ENCODE measurements at regions of chr7 and their contacts with region 1.

Region 1: DNA sequence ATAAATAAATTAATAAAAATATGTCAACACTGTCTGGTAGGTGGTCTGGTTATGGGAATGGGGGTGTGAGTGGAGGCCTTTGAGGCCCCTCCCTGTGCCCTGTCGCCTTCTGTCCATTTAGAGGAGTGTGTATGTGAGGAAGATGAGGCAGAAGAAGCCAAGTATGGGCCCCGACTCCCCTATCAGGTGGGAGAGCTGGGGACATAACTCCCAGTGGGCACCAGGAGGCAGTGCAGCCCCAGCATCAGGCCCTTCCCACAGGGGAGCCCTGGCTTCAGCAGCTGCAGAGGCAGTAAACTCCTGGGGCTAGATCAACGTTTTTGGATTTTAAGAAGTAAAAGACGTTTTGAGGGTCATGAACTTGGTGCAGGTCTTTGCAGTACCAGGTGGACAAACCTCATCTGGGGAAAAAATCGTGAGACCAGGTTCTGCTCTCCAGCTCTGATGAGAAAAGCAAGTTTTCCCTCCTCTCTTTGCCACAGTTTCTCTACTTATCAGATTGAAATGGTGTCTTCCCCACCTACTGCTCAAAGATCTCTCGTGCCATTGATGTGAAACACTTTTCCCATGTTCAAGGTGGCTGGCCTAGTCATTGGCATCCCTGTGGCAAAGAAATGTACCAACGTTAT is 167.8 kb upstream of the EEPD1 start:
- H3K4me3 ChIP-seq: no peak overlapping the region
- H3K27ac ChIP-seq: no peak overlapping the region
- H3K4me1 ChIP-seq: no peaks in the 10 kb centered on the region
- CTCF ChIP-seq: peak; percentile 66

Region 2: GRCh38 chr7:35694781-35695472 is 290.3 kb before region 1 on chr7 and contains the start of gene HERPUD2:
- CTCF ChIA-PET with region 1: no interaction called
- POLR2A ChIA-PET with region 1: no interaction called
- H3K4me3 ChIP-seq: peak within 1 kb of the TSS; percentile 90
- H3K27ac ChIP-seq: peak within 1 kb of the TSS; percentile 78
- H3K4me1 ChIP-seq: no peaks in the 10 kb centered on the region
- CTCF ChIP-seq: peak; percentile 69

Region 3: GRCh38 chr7:35736725-35737124 is 248.5 kb before region 1 on chr7:
- CTCF ChIA-PET with region 1: no interaction called
- POLR2A ChIA-PET with region 1: no interaction called
- H3K4me3 ChIP-seq: no peak overlapping the region
- H3K27ac ChIP-seq: no peak overlapping the region
- H3K4me1 ChIP-seq: no peaks in the 10 kb centered on the region
- CTCF ChIP-seq: no peak

Region 4: GRCh38 chr7:36021367-36021766 is 36.1 kb after region 1 on chr7:
- CTCF ChIA-PET with region 1: interaction called, 13 read pairs
- POLR2A ChIA-PET with region 1: no interaction called
- H3K4me3 ChIP-seq: no peak overlapping the region
- H3K27ac ChIP-seq: no peak overlapping the region
- H3K4me1 ChIP-seq: no peaks in the 10 kb centered on the region
- CTCF ChIP-seq: no peak

Region 5: GRCh38 chr7:36291387-36292316 is 306.4 kb after region 1 on chr7:
- CTCF ChIA-PET with region 1: interaction called, 73 read pairs
- POLR2A ChIA-PET with region 1: no interaction called
- H3K4me3 ChIP-seq: no peak overlapping the region
- H3K27ac ChIP-seq: no peak overlapping the region
- H3K4me1 ChIP-seq: no peaks in the 10 kb centered on the region
- CTCF ChIP-seq: peak; percentile 93

Region 6: DNA sequence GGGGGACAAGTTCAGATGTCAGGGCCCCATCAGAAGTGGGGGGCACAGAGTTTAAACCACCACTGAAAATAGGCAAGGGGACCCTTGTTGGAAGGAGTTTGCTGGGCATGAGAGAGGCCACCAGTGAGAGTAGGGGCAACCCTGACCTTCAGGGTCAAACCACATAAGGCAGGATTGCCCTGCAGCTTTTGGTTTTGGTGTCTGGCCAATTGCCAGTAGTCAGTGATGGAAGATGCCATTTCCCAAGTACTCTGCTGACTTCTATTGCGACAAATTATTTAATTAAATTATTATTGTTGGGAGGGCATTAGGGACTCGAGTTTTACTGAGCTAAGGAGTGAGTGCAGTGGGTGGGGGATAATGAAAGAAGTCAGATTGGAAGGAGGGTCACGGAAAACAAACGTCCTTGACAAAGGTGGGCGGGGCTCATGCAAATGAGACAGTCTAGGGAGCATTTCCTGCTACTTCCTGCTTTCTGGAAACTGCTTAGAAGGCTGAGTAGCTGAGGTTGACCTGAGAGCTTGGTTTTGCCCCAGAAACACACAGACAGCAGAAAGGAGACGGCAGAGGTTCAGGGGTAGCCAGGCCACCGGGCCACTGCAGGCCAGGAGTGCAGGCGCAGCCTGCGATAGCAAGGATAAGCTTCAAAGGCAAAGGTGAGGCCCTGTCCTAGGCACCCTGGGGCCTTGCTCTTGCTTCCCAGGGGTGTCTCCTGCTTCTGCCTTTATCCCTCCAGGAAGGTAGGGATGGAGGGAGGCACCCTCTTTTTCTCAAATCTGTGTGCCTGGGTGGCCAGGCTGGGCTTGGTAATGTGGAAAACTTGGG is 330.3 kb after region 1 on chr7:
- CTCF ChIA-PET with region 1: interaction called, 64 read pairs
- POLR2A ChIA-PET with region 1: no interaction called
- H3K4me3 ChIP-seq: no peak overlapping the region
- H3K27ac ChIP-seq: no peak overlapping the region
- H3K4me1 ChIP-seq: no peaks in the 10 kb centered on the region
- CTCF ChIP-seq: no peak